ENCODE measurements at regions of chr20 and their contacts with region 1.

Region 1: GRCh38 chr20:43514062-43514999 is 6.8 kb downstream of the L3MBTL1 start:
- DNase-seq: peak; percentile 88
- H3K4me3 Mint-ChIP-seq: peak overlapping the region; percentile 95
- H3K27ac Mint-ChIP-seq: peak overlapping the region; percentile 91
- H3K4me1 Mint-ChIP-seq: no peaks in the 10 kb centered on the region
- H3K27me3 Mint-ChIP-seq: peaks cover 4% of the 10 kb centered on the region

Region 2: DNA sequence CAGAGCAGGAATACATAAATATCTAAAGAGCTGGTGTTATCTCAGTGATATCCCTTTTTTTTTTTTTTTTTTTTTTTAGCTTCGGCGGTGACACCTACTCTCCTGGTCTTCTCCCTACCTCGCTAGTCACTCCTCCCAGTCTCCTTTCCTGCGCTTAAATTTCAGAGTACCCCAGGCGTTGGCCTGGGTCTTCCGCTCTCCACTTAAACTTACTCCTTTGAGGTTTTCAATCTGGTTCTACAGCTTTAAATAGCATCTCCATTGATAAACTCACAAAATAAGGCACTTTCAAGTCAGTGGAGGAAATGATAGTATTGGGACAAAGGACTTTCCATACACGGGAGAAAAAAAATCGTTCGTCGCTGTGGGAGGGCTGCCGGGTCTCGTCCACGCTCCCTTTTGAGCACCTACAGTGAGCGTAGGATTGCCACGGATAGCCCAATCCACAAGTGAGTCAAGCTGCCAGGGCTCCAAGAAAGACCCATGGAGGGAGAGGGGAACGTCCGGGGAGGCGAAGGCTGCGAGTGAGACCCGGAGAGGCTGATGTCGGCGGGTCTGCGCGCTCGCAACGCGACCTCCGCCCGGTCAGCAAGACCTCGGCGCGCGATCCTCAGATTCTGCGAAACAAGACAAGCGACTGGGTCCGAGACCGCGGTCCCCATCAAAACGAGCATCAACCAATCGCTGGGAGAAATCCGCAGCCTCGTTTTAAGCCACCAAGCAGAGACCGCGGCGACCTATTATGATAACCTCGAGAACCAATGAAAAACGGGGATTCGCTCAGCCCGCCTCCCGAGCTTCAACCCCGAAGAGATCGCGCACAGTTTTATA is 57.3 kb before region 1 on chr20:
- intact Hi-C with region 1: loop called (anchors 1 kb)
- DNase-seq: peak; percentile 83
- H3K4me3 Mint-ChIP-seq: peak overlapping the region; percentile 88
- H3K27ac Mint-ChIP-seq: peak overlapping the region; percentile 100
- H3K4me1 Mint-ChIP-seq: peaks cover 34% of the 10 kb centered on the region
- H3K27me3 Mint-ChIP-seq: peaks cover 17% of the 10 kb centered on the region

Region 3: GRCh38 chr20:43492101-43492500 is 22.2 kb before region 1 on chr20:
- intact Hi-C with region 1: loop called (anchors 1 kb)
- DNase-seq: no peak
- H3K4me3 Mint-ChIP-seq: no peak overlapping the region
- H3K27ac Mint-ChIP-seq: peak overlapping the region; percentile 34
- H3K4me1 Mint-ChIP-seq: peaks cover 7% of the 10 kb centered on the region
- H3K27me3 Mint-ChIP-seq: no peaks in the 10 kb centered on the region

Region 4: DNA sequence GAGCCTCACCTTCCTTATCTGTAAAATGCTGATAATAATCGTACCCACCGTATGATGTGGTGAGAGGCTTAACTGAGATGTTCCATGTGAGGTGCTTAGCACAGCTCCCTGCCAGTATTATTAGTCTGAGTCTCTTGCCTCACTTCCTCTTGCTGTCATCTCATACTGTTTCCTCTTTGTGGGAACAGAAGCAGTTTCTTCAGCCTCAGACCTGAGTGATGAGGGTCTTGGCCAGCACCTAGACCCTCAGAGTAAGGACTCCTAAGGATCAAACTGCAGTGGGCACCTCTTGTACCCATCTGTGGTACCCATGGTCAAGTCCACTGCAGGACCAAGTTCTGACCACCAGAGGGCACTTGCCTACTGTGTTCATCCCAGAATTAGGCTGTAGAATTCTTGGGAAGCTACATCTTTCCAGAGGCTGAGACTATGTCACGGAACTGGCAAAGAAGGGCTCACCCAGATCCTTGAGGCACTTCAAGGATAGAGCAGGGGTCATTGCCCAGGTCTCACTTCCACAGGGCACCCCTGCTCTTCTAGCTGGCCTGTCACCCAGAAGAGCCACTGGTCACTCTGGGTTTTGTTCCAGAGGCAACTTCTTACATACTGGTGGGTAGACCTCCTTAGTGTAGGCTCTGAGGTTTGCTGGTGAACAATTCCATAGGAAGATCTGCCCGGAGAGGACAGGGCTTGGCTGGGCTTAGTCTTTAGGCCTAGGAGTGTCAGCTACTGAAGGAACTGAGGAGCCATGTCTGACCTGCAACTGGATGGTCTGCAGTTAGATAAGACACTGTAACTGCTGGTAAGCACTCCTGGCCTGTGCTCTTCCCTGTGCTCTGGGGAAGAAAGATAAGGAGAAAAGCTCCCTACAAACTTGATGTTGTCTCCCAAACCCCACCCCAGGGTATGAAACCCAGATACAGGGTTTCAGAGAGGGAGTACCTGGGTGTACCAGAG is 23.9 kb after region 1 on chr20:
- intact Hi-C with region 1: loop called (anchors 1 kb)
- DNase-seq: peak; percentile 18
- H3K4me3 Mint-ChIP-seq: no peak overlapping the region
- H3K27ac Mint-ChIP-seq: no peak overlapping the region
- H3K4me1 Mint-ChIP-seq: no peaks in the 10 kb centered on the region
- H3K27me3 Mint-ChIP-seq: no peaks in the 10 kb centered on the region